ENCODE measurements at regions of chr14 and their contacts with region 1.

Region 1: DNA sequence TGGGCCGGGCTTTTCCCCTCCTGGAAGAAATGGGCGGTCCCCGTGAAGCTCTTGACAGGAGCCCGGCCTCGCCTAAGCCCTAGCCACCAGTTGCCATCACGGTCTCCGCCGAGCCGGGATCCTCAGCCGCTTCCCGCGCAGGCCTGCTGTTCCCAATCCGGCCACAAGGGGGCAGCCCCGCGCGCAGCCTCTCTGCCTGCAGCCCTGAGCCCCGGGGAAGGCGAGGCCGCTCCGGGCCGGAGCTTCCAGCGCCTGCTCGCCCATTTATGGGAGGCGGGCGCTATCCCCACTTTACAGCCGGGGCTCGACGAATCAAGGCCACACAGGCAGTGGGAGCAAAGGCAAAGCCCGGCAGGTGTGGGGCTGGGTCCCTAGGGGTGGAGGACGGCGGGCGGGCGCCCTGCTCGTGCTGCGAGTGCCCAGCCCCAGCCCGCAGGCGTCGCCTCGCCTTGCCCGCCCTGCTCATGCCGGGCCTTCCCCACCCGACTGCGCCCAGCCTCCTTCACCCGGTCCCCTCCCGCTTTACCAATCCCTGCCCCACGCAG is 61.5 kb downstream of the LGMN start:
- DNase-seq: peak; percentile 82
- ATAC-seq: peak; percentile 83 to 84

Region 2: DNA sequence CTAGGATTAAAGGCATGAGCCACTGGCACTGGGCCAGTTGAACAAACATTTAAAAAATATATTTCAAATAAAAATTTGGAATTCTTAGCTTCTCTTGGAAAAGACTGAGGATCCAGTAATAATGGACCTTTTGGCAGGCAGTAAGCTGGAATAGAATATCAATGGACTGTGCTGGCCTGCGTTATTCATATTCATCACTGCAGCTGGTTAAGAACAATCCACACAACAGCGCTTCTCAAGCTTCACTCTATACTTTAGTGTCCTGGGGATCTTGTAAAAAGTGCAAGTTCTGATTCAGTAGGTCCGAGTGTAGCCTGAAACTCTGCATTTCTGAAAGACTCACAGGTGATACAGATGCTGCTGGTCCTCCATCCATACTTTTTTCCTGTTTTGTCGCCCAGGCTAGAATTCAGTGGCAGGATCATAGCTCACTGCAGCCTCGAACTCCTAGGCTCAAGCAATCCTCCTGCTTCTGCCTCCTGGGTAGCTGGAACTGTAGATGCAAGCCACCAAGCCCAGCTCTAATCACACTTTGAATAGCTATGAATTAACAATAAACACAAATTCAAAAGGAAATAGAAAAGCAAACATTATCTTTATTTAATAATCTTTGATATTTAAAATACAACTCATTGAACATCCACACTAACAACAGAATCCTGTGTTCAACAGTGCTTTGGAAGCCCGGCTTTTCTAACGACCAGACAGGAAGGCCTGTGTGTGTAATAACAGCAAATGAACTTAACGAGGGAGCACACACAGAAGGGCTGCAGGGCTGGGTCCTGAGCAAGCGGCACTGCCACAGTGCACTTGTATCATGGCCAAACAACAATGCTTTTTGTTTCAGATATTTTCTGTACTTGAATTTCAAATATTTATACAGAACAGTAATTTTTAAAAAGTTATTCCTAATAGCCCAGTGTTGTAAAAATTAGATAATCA is 628.7 kb before region 1 on chr14:
- intact Hi-C with region 1: no loop called
- DNase-seq: no peak
- ATAC-seq: no peak

Region 3: DNA sequence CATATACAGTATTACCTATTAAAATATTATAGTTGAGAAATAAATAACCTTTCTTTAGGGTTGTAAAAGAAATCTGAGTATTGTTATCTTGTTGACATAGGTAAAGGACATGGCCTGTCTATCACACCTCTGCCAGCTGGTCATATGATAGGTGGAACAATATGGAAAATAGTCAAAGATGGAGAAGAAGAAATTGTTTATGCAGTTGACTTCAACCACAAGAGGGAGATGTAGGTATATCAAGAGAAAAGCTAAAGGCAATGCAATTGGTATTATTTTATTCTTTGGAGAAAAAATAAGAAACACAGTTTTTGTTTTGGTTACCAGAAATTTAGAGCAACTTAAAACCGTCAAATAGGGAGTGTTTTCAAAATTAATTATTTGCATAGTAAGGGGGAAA is 551.7 kb before region 1 on chr14:
- intact Hi-C with region 1: loop called in 1 of 2 experiments (anchors 10 kb)
- DNase-seq: no peak
- ATAC-seq: no peak

Region 4: GRCh38 chr14:92659765-92660561 is 27.0 kb before region 1 on chr14:
- intact Hi-C with region 1: no loop called
- DNase-seq: peak; percentile 46
- ATAC-seq: peak; percentile 53 to 56

Region 5: DNA sequence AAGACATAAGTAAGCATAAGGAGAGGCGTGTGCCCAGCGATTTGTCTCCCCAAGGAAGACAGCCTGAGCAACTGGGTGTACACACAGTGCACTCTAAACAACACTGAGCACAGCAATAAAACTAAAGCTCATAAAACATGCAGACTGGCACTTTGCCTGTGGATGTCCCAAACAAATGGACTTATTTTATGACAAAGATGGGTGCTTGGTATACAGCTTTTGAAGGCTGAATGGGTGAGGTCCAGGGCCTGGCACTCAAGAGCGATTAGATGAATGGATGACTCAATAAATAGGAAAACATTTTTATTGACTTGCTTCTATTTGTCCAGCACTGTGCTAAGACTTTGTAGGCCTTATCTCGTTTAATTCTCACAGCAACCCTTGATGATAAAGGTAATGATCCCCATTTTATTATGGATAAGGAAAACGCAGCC is 32.9 kb after region 1 on chr14:
- intact Hi-C with region 1: no loop called
- DNase-seq: no peak
- ATAC-seq: peak; percentile 16 to 33